Activated CD8-positive, alpha-beta memory T cell treated with anti-CD3 and anti-CD28 coated beads, Interleukin-2, amount 10 ng/mL, durations not matched to agents 7 days and 5 days (primary cell): ENCODE measurements at regions of chr12 and their contacts with region 1.

Region 1: DNA sequence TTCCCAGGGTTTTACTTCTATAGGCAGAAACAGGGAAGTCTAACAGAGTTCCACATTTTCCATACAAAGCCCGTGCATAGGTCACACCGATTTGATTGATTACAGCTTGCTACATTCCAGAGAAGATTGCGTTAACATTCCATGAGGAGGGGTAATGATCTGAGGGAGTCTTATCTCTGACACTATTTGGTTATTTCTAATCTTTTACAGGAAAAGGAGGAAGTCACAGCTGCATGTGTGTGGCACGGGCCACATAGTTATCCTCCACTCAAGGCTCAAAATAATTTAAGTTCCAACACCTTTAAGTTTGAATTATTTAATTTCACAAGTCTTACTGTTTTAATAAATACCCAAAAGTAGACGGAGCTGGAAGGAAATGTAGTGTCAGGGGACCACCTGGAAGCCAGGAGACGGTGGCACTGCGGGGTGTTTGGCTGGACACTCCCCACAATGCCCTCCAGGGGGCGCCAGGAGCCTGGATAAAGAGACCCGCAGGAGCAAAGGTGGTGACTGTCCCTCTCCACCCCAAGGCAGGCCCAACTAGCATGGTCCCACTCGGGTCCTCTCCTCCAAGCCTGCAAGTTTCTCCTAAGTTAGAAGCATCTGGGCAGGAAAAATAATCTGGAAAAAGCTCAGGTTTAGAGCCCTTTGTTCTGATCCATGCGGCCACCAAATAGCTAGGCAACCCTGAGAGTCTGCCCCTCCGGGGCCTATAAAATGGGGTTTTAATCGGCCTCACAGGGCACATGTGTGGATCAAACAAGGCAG is 20.2 kb downstream of the KRT8 start:
- DNase-seq: peak; percentile 84
- ATAC-seq: peak; percentile 86
- H3K4me3 Mint-ChIP-seq: no peak overlapping the region
- H3K27ac Mint-ChIP-seq: no peak overlapping the region
- H3K4me1 Mint-ChIP-seq: peaks cover 4% of the 10 kb centered on the region
- H3K27me3 Mint-ChIP-seq: peaks cover 14% of the 10 kb centered on the region

Region 2: GRCh38 chr12:52779914-52780313 is 104.8 kb before region 1 on chr12:
- CTCF ChIA-PET with region 1: no interaction called
- DNase-seq: no peak
- ATAC-seq: no peak
- H3K4me3 Mint-ChIP-seq: no peak overlapping the region
- H3K27ac Mint-ChIP-seq: no peak overlapping the region
- H3K4me1 Mint-ChIP-seq: no peaks in the 10 kb centered on the region
- H3K27me3 Mint-ChIP-seq: peaks cover 43% of the 10 kb centered on the region

Region 3: GRCh38 chr12:52895061-52895887 is 10.6 kb after region 1 on chr12:
- CTCF ChIA-PET with region 1: interaction called, 37 read pairs
- DNase-seq: no peak
- ATAC-seq: no peak
- H3K4me3 Mint-ChIP-seq: no peak overlapping the region
- H3K27ac Mint-ChIP-seq: no peak overlapping the region
- H3K4me1 Mint-ChIP-seq: no peaks in the 10 kb centered on the region
- H3K27me3 Mint-ChIP-seq: peaks cover 5% of the 10 kb centered on the region

Region 4: GRCh38 chr12:52949413-52950331 is 65.0 kb after region 1 on chr12:
- CTCF ChIA-PET with region 1: interaction called, 18 read pairs
- DNase-seq: no peak
- ATAC-seq: no peak
- H3K4me3 Mint-ChIP-seq: peak overlapping the region; percentile 11
- H3K27ac Mint-ChIP-seq: no peak overlapping the region
- H3K4me1 Mint-ChIP-seq: peaks cover 2% of the 10 kb centered on the region
- H3K27me3 Mint-ChIP-seq: peaks cover 16% of the 10 kb centered on the region

Region 5: DNA sequence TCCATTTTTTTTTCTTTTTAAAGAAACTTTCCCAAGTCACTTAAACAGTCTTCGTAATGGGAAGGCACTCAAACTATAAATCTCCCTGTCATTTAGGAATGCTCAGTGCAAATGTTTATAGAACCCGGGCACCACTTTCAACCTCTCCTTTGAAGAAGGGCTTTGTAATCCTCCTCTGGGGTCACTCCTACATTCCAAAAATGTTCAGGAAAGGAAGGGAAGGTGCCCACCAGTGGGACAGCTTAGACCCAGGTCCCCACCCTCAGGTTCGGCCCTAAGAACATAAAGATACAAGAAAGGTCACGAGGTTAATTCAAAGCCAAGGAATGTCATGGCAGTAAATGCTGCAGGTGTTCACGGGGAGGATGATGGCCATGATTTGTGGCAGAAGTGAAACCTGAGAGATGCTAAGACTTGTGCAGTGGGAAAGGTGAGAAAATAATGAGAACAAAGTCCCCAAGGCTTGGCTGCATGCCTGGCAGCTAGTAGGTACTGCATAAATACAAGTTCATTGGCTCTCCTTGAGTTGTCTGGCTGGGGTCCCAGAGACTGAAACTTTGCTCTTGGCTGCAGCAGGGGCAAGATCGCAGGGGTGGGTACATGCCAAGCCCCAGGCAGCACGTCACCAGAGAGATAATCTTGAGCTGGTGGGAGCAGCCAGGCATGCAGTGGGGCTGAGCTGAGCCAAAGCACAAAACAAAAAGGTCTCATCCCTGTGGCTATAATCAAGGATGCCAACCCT is 85.3 kb after region 1 on chr12:
- CTCF ChIA-PET with region 1: interaction called, 31 read pairs
- DNase-seq: no peak
- ATAC-seq: no peak
- H3K4me3 Mint-ChIP-seq: no peak overlapping the region
- H3K27ac Mint-ChIP-seq: no peak overlapping the region
- H3K4me1 Mint-ChIP-seq: peaks cover 4% of the 10 kb centered on the region
- H3K27me3 Mint-ChIP-seq: peaks cover 12% of the 10 kb centered on the region